Activated T-helper 2 cell treated with anti-CD3 and anti-CD28 coated beads, Interferon-gamma antibody, Interleukin-2, Interleukin-4, amounts not matched to agents 10 μg/mL and 5 μg/mL and 100 μg/mL, durations not matched to agents 14 hours and 24 hours and 36 hours (primary cell): ENCODE measurements at regions of chr16 and their contacts with region 1.

Region 1: DNA sequence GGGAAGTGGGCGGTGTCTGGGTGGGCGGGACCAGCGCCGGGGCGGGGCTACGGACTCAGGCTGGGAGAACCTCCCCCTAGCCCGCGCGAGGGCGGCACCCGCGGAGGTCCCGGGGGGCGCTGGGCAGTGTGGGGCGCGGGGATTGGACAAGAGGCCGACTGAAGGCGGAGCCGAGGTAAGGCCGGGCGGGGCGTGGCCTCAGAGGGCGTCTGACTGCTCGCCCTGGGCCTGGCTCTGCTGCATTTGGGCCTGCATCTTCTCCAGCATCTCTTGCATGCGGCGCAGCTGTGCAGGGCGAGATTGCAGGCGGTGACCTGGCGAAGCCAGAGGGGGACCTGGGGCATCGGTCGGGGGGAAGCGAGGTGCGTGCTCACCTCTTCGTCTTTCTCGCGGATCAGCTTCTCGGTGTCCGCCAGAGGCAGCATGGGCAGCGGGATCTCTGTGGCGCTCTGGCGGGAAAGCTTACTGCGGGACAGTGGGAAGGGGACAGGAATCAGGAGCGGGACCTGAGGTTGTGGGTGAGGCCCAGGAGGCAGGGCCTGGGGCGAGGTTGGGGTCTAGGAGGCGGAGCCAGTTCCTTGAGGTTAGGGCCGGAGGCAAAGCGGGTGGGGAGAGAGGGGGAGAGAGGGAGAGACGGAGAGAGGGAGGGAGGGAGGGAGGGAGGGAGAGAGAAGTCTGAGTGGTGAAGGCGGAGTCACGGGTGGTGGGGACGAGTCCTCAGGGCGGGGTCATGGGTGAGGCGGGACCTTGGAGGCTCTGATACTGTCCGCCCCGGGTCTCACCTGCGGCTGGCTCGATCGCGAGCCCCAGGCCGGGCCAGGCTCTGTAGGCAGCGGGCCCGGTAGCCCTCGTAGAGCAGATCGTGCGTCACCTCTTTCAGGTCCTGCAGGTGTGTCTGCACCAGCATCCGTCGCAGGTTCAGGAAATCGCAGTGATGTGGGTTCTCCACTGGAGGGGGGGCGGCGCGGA is 3.8 kb downstream of the SEPTIN1 start:
- DNase-seq: peak; percentile 97
- H3K4me3 Mint-ChIP-seq: peak overlapping the region; percentile 81
- H3K27ac Mint-ChIP-seq: peak overlapping the region; percentile 99
- H3K4me1 Mint-ChIP-seq: peaks cover 37% of the 10 kb centered on the region
- H3K27me3 Mint-ChIP-seq: no peaks in the 10 kb centered on the region

Region 2: GRCh38 chr16:30395155-30395991 is 16.9 kb after region 1 on chr16 and contains the start of gene ZNF48:
- intact Hi-C with region 1: loop called (anchors 1 kb)
- DNase-seq: peak; percentile 41
- H3K4me3 Mint-ChIP-seq: peak within 1 kb of the TSS; percentile 87
- H3K27ac Mint-ChIP-seq: peak within 1 kb of the TSS; percentile 88
- H3K4me1 Mint-ChIP-seq: peaks cover 33% of the 10 kb centered on the region
- H3K27me3 Mint-ChIP-seq: no peaks in the 10 kb centered on the region
- total RNA-seq, gene ZNF48: 13.4 TPM in 2 replicates

Region 3: GRCh38 chr16:30761928-30762810 is 383.6 kb after region 1 on chr16 and contains the starts of genes CFAP119 and RNF40:
- intact Hi-C with region 1: no loop called
- DNase-seq: peak; percentile 95
- H3K4me3 Mint-ChIP-seq: peak within 1 kb of the TSS; percentile 85
- H3K27ac Mint-ChIP-seq: peak within 1 kb of the TSS; percentile 83
- H3K4me1 Mint-ChIP-seq: peaks cover 17% of the 10 kb centered on the region
- H3K27me3 Mint-ChIP-seq: no peaks in the 10 kb centered on the region
- total RNA-seq, gene CFAP119: 2.3 and 2.8 TPM in 2 replicates
- total RNA-seq, gene RNF40: 83.8 and 91.6 TPM in 2 replicates